ENCODE measurements at regions of chr5 and their contacts with region 1.

Region 1: GRCh38 chr5:78964887-78965286 is 20.2 kb downstream of the ARSB start:
- DNase-seq: no peak
- ATAC-seq: no peak
- H3K4me3 Mint-ChIP-seq: no peak overlapping the region
- H3K27ac Mint-ChIP-seq: no peak overlapping the region
- H3K4me1 Mint-ChIP-seq: no peaks in the 10 kb centered on the region
- H3K27me3 Mint-ChIP-seq: no peaks in the 10 kb centered on the region

Region 2: GRCh38 chr5:78537821-78538220 is 427.1 kb before region 1 on chr5:
- CTCF ChIA-PET with region 1: no interaction called
- POLR2A ChIA-PET with region 1: no interaction called
- intact Hi-C with region 1: loop called in 1 of 2 experiments (anchors 10 kb)
- DNase-seq: no peak
- ATAC-seq: peak; percentile 51
- H3K4me3 Mint-ChIP-seq: no peak overlapping the region
- H3K27ac Mint-ChIP-seq: no peak overlapping the region
- H3K4me1 Mint-ChIP-seq: no peaks in the 10 kb centered on the region
- H3K27me3 Mint-ChIP-seq: no peaks in the 10 kb centered on the region

Region 3: GRCh38 chr5:78893940-78894677 is 70.8 kb before region 1 on chr5:
- CTCF ChIA-PET with region 1: no interaction called
- POLR2A ChIA-PET with region 1: no interaction called
- intact Hi-C with region 1: no loop called
- DNase-seq: no peak
- ATAC-seq: no peak
- H3K4me3 Mint-ChIP-seq: no peak overlapping the region
- H3K27ac Mint-ChIP-seq: no peak overlapping the region
- H3K4me1 Mint-ChIP-seq: no peaks in the 10 kb centered on the region
- H3K27me3 Mint-ChIP-seq: no peaks in the 10 kb centered on the region